CD4-positive, alpha-beta memory T cell (primary cell): ENCODE measurements at regions of chr9 and their contacts with region 1.

Region 1: DNA sequence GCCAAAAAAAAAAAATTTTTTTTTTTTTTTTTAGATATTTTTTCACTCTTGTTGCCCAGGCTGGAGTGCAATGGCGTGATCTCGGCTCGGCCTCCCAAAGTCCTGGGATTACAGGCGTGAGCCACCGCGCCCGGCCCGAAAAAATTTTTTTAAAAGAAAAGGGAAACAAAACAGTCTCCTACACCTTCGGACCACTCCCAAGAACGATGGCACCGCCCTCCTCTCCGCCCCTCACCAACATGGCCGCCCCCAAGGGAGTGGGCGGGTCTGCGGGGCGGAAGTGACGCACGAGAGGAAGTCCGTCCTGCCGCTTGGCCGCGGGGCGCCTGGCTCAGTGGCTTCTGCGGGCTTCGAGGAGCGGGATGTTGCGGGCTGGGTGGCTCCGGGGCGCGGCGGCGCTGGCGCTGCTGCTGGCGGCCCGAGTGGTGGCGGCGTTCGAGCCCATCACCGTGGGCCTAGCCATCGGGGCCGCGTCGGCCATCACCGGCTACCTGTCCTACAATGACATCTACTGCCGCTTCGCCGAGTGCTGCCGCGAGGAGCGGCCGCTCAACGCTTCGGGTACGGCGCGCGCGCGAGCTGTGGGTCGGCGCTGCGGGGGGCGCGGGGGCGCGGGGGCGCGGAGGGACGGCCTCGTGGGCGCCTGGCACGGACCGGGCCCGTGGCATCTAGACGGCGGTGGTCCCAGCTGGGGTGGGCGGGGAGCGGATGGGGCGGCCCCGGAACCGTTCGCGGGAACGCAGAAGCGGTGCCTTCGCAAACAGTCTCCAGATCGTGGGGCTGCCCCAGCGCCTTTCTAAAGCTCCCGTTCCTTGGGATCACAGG is at the start of gene TOR1B:
- DNase-seq: peak; percentile 93 to 96 (median 94)
- H3K4me3 ChIP-seq: peak within 1 kb of the TSS; percentile 77 to 78
- H3K4me3 Mint-ChIP-seq: peak within 1 kb of the TSS; percentile 91 to 96 (median 93)
- H3K27ac ChIP-seq: peak within 1 kb of the TSS; percentile 85
- H3K27ac Mint-ChIP-seq: peak within 1 kb of the TSS; percentile 88 to 97 (median 95)
- H3K4me1 ChIP-seq: peaks cover 27% of the 10 kb centered on the region
- H3K4me1 Mint-ChIP-seq: peaks cover 17 to 31% (median 23%) of the 10 kb centered on the region in 4 donors
- H3K27me3 ChIP-seq: no peaks in the 10 kb centered on the region
- H3K27me3 Mint-ChIP-seq: no peaks in the 10 kb centered on the region
- total RNA-seq, gene TOR1B: 29.5 to 33.0 TPM

Region 2: DNA sequence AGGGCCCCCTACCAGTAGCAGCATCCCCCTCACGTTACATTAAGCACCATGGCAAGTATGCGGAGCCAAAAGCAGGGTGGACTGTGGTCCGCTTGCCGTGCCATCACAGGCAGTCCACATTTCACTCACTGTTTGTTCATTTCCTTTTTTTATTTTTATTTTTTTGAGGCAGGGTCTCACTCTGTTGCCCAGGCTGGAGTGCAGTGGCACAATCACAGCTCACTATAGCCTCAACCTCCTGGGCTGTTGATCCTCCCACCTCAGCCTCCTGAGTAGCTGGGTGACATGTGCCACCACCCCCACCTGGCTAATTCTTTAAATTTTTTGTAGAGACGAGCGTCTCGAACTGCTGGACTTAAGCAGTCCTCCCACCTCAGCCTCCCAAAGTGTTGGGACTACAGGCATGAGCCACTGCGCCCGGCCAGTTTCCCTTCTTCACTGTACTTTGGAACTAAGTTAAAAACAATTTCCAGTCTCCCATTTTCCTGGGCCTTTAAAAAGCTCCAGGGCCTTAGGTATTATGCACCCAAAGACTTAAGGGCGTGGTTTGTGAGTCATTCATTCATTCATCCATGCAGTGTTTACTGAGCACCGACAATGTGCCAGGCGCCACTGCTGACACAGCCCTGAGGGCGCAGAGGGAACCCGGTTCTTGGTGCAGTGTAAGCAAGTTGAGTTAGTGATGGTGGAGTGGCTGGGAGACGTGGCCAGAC is 117.7 kb before region 1 on chr9:
- CTCF ChIA-PET with region 1: no interaction called
- POLR2A ChIA-PET with region 1: no interaction called
- intact Hi-C with region 1: no loop called
- DNase-seq: no peak
- H3K4me3 ChIP-seq: no peak overlapping the region
- H3K4me3 Mint-ChIP-seq: no peak overlapping the region
- H3K27ac ChIP-seq: no peak overlapping the region
- H3K27ac Mint-ChIP-seq: peak overlapping the region in 1 of 7 donors; percentile 17
- H3K4me1 ChIP-seq: no peaks in the 10 kb centered on the region
- H3K4me1 Mint-ChIP-seq: no peaks in the 10 kb centered on the region
- H3K27me3 ChIP-seq: no peaks in the 10 kb centered on the region
- H3K27me3 Mint-ChIP-seq: peaks cover 4 to 7% of the 10 kb centered on the region in 2 donors

Region 3: GRCh38 chr9:129726322-129727160 is 76.5 kb before region 1 on chr9:
- CTCF ChIA-PET with region 1: no interaction called
- POLR2A ChIA-PET with region 1: no interaction called
- intact Hi-C with region 1: no loop called
- DNase-seq: peak in 4 of 5 donors; percentile 49 to 52 (median 50)
- H3K4me3 ChIP-seq: no peak overlapping the region
- H3K4me3 Mint-ChIP-seq: peak overlapping the region in 4 of 8 donors; percentile 35 to 55 (median 46)
- H3K27ac ChIP-seq: no peak overlapping the region
- H3K27ac Mint-ChIP-seq: peak overlapping the region in 1 of 7 donors; percentile 35
- H3K4me1 ChIP-seq: no peaks in the 10 kb centered on the region
- H3K4me1 Mint-ChIP-seq: peaks cover 0 to 4% (median under 1%) of the 10 kb centered on the region in 4 donors
- H3K27me3 ChIP-seq: no peaks in the 10 kb centered on the region
- H3K27me3 Mint-ChIP-seq: peaks cover 0 to 6% of the 10 kb centered on the region in 2 donors

Region 4: GRCh38 chr9:129823935-129824601 is 21.0 kb after region 1 on chr9 and contains the start of gene TOR1A:
- CTCF ChIA-PET with region 1: no interaction called
- POLR2A ChIA-PET with region 1: interaction called, 6 read pairs
- intact Hi-C with region 1: loop called (anchors 1 kb)
- DNase-seq: peak; percentile 89 to 95 (median 90)
- H3K4me3 ChIP-seq: peak within 1 kb of the TSS; percentile 24 to 73
- H3K4me3 Mint-ChIP-seq: peak within 1 kb of the TSS; percentile 84 to 91 (median 88)
- H3K27ac ChIP-seq: peak within 1 kb of the TSS; percentile 62
- H3K27ac Mint-ChIP-seq: peak within 1 kb of the TSS; percentile 73 to 95 (median 88)
- H3K4me1 ChIP-seq: peaks cover 8% of the 10 kb centered on the region
- H3K4me1 Mint-ChIP-seq: peaks cover 8 to 18% (median 13%) of the 10 kb centered on the region in 4 donors
- H3K27me3 ChIP-seq: no peaks in the 10 kb centered on the region
- H3K27me3 Mint-ChIP-seq: no peaks in the 10 kb centered on the region
- total RNA-seq, gene TOR1A: 39.8 to 41.9 TPM